Thyroid gland (tissue), 4 donors: ENCODE measurements at regions of chr5 and their contacts with region 1.

Region 1: GRCh38 chr5:180860887-180861822 is at the start of gene ZFP62:
- DNase-seq: peak; percentile 92 to 94
- H3K4me3 ChIP-seq: peak within 1 kb of the TSS; percentile 54 to 95 (median 76)
- H3K27ac ChIP-seq: peak within 1 kb of the TSS; percentile 67 to 85 (median 81)
- H3K4me1 ChIP-seq: peaks cover 8 to 15% of the 10 kb centered on the region in 2 donors
- H3K27me3 ChIP-seq: no peaks in the 10 kb centered on the region
- CTCF ChIP-seq: peak in 1 of 6 experiments; percentile 2
- POLR2A ChIP-seq: peak in 1 of 2 donors; percentile 80
- total RNA-seq, gene ZFP62: 41.1 to 58.9 (median 47.3) TPM

Region 2: GRCh38 chr5:180802325-180803180 is 58.6 kb before region 1 on chr5 and contains the start of gene MGAT1:
- intact Hi-C with region 1: loop called (anchors 5 kb)
- DNase-seq: peak; percentile 83 to 86
- H3K4me3 ChIP-seq: peak within 1 kb of the TSS; percentile 51 to 92 (median 87)
- H3K27ac ChIP-seq: peak within 1 kb of the TSS; percentile 96 to 98 (median 97)
- H3K4me1 ChIP-seq: peaks cover 85 to 88% of the 10 kb centered on the region in 2 donors
- H3K27me3 ChIP-seq: no peaks in the 10 kb centered on the region
- CTCF ChIP-seq: no peak
- POLR2A ChIP-seq: peak; percentile 76 to 97
- total RNA-seq, gene MGAT1: 155 to 283 (median 200) TPM

Region 3: DNA sequence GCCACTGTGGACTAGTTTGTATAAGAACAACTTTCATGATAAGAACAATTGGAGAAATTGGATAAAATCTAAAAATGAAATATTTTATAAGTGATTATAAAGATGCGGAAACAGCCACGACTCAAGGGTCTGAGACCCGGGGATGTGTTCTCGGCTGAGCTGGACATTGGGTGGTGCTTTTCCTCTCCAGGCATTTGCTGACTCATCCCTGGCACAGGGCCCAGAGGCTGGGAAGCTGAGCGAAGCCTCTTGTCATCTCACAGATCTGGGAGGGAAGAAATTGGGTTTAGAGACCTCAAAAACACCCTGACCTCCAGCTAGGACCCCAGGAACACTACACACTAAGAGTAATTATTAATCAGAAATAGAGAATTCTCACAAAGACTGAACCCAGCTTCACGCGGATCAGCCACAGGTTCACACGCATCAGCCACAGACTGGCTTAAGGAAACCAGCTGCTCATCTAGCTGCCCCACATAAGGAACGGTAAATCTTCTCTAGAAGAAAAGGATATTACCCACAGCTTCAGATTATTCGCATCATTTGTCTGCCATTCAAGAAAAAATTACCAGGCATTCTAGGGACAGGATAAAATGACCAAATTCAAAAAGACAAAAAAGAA is 272.6 kb after region 1 on chr5:
- intact Hi-C with region 1: no loop called
- DNase-seq: peak; percentile 65 to 68
- H3K4me3 ChIP-seq: no peak overlapping the region
- H3K27ac ChIP-seq: no peak overlapping the region
- H3K4me1 ChIP-seq: peaks cover 0 to 3% of the 10 kb centered on the region in 2 donors
- H3K27me3 ChIP-seq: no peaks in the 10 kb centered on the region
- CTCF ChIP-seq: no peak
- POLR2A ChIP-seq: no peak